ENCODE measurements at regions of chr1 and their contacts with region 1.

Region 1: GRCh38 chr1:11838349-11839272 is 9.0 kb downstream of the NPPA start:
- DNase-seq: peak; percentile 63
- H3K4me3 Mint-ChIP-seq: no peak overlapping the region
- H3K27ac Mint-ChIP-seq: no peak overlapping the region
- H3K4me1 Mint-ChIP-seq: no peaks in the 10 kb centered on the region
- H3K27me3 Mint-ChIP-seq: no peaks in the 10 kb centered on the region

Region 2: GRCh38 chr1:11407301-11407994 is 431.2 kb before region 1 on chr1:
- intact Hi-C with region 1: no loop called
- DNase-seq: peak; percentile 15
- H3K4me3 Mint-ChIP-seq: peak overlapping the region; percentile 48
- H3K27ac Mint-ChIP-seq: peak overlapping the region; percentile 67
- H3K4me1 Mint-ChIP-seq: peaks cover 23% of the 10 kb centered on the region
- H3K27me3 Mint-ChIP-seq: peaks cover 6% of the 10 kb centered on the region

Region 3: GRCh38 chr1:11617310-11617709 is 221.3 kb before region 1 on chr1:
- intact Hi-C with region 1: no loop called
- DNase-seq: no peak
- H3K4me3 Mint-ChIP-seq: no peak overlapping the region
- H3K27ac Mint-ChIP-seq: no peak overlapping the region
- H3K4me1 Mint-ChIP-seq: no peaks in the 10 kb centered on the region
- H3K27me3 Mint-ChIP-seq: peaks cover 3% of the 10 kb centered on the region

Region 4: DNA sequence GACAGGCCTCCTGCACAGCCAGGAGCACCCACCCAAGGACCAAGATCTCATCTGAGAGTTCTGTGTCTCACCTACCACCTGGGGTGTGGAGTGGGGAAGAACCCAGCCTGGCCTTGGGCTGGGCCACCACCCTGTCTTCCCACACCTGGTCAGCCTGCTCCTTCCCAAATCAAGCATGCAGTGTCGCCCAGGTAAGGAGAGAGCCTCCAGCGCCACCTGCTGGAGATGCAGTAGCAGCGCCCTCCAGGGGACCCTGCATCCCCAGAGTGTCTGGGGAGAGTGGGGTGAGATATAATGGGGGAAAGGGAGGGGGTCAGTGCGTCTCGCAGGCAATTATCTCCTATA is 55.3 kb after region 1 on chr1:
- intact Hi-C with region 1: loop called (anchors 1 kb)
- DNase-seq: peak; percentile 52
- H3K4me3 Mint-ChIP-seq: no peak overlapping the region
- H3K27ac Mint-ChIP-seq: no peak overlapping the region
- H3K4me1 Mint-ChIP-seq: no peaks in the 10 kb centered on the region
- H3K27me3 Mint-ChIP-seq: peaks cover 32% of the 10 kb centered on the region

Measured in activated T-helper 1 cell treated with anti-CD3 and anti-CD28 coated beads, Interleukin-12 subunit alpha, Interleukin-12 subunit beta, Interleukin-2, Interleukin-4 antibody, amounts not matched to agents 30 ng/mL and 10 ng/mL and 1 ng/mL, durations not matched to agents 14 hours and 24 hours and 36 hours (primary cell).